B cell (primary cell): ENCODE measurements at regions of chr18 and their contacts with region 1.

Region 1: DNA sequence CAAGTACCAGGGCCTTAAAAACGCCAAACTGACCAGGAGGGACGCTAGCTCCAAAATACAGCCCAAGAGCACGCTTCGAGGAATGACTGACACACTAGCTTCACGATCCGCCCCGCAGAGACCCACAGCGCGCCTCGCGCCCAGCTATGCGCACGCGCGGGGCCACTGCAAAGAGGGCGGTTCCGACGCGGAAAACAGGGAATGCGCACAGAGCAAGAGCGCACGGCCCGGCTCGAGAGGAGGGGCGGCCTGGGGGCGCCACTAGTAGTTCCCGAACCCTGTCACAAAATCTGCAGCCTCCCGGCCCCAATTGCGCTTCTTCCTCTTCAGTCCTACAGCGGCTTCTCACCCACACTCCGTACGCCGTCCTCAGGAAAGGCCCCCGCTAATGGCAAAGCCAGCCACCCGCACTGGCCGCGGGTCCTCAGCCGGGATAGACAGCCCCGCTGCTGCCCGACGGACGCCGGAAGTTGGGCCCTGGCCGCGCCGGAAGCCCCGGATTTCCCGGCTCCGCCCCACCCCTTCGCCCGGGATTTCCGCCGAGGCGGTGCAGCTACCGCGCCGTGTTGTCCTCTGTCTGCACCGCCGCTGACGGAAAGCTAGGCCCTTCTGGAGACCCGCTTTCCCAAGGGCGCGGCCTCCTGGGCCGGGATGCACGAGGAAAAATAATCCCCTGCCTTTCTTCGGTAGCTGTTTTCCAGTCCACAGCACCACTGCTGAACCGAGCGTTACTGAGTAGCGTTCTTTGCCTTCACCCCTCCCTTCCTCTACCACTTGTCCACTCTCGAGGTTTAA is at the start of gene HDHD2:
- DNase-seq: peak; percentile 73
- ATAC-seq: peak; percentile 77
- H3K4me3 ChIP-seq: peak within 1 kb of the TSS; percentile 73 to 97 (median 87)
- H3K4me3 Mint-ChIP-seq: peak within 1 kb of the TSS; percentile 95
- H3K27ac ChIP-seq: peak within 1 kb of the TSS; percentile 48 to 89
- H3K27ac Mint-ChIP-seq: peak within 1 kb of the TSS; percentile 92
- H3K4me1 ChIP-seq: peaks cover 14 to 15% of the 10 kb centered on the region in 2 donors
- H3K4me1 Mint-ChIP-seq: peaks cover 35% of the 10 kb centered on the region
- H3K27me3 ChIP-seq: no peaks in the 10 kb centered on the region
- H3K27me3 Mint-ChIP-seq: no peaks in the 10 kb centered on the region
- CTCF ChIP-seq: no peak
- total RNA-seq, gene HDHD2: 43.9 and 45.5 TPM in 2 replicates

Region 2: GRCh38 chr18:46104128-46104911 is 1045.9 kb before region 1 on chr18 and contains the start of gene HAUS1:
- CTCF ChIA-PET with region 1: no interaction called
- POLR2A ChIA-PET with region 1: no interaction called
- intact Hi-C with region 1: loop called (anchors 10 kb)
- DNase-seq: peak; percentile 80
- ATAC-seq: peak; percentile 100
- H3K4me3 ChIP-seq: peak within 1 kb of the TSS; percentile 79 to 100 (median 90)
- H3K4me3 Mint-ChIP-seq: peak within 1 kb of the TSS; percentile 98
- H3K27ac ChIP-seq: peak within 1 kb of the TSS; percentile 56 to 64
- H3K27ac Mint-ChIP-seq: peak within 1 kb of the TSS; percentile 91
- H3K4me1 ChIP-seq: peaks cover 8 to 11% of the 10 kb centered on the region in 2 donors
- H3K4me1 Mint-ChIP-seq: peaks cover 18% of the 10 kb centered on the region
- H3K27me3 ChIP-seq: no peaks in the 10 kb centered on the region
- H3K27me3 Mint-ChIP-seq: no peaks in the 10 kb centered on the region
- CTCF ChIP-seq: no peak
- total RNA-seq, gene HAUS1: 28.4 and 30.9 TPM in 2 replicates

Region 3: GRCh38 chr18:47062471-47062870 is 87.8 kb before region 1 on chr18:
- CTCF ChIA-PET with region 1: no interaction called
- POLR2A ChIA-PET with region 1: no interaction called
- intact Hi-C with region 1: no loop called
- DNase-seq: no peak
- ATAC-seq: no peak
- H3K4me3 ChIP-seq: no peak overlapping the region
- H3K4me3 Mint-ChIP-seq: no peak overlapping the region
- H3K27ac ChIP-seq: no peak overlapping the region
- H3K27ac Mint-ChIP-seq: no peak overlapping the region
- H3K4me1 ChIP-seq: no peaks in the 10 kb centered on the region
- H3K4me1 Mint-ChIP-seq: no peaks in the 10 kb centered on the region
- H3K27me3 ChIP-seq: no peaks in the 10 kb centered on the region
- H3K27me3 Mint-ChIP-seq: no peaks in the 10 kb centered on the region
- CTCF ChIP-seq: no peak

Region 4: GRCh38 chr18:47175908-47176575 is 25.8 kb after region 1 on chr18 and contains the start of gene IER3IP1:
- CTCF ChIA-PET with region 1: interaction called, 3 read pairs
- POLR2A ChIA-PET with region 1: interaction called, 5 read pairs
- intact Hi-C with region 1: loop called (anchors 1 kb)
- DNase-seq: peak; percentile 92
- ATAC-seq: peak; percentile 97
- H3K4me3 ChIP-seq: peak within 1 kb of the TSS; percentile 74 to 95 (median 91)
- H3K4me3 Mint-ChIP-seq: peak within 1 kb of the TSS; percentile 26
- H3K27ac ChIP-seq: peak within 1 kb of the TSS in 1 of 2 donors; percentile 67
- H3K27ac Mint-ChIP-seq: peak within 1 kb of the TSS; percentile 86
- H3K4me1 ChIP-seq: peaks cover 14 to 15% of the 10 kb centered on the region in 2 donors
- H3K4me1 Mint-ChIP-seq: peaks cover 7% of the 10 kb centered on the region
- H3K27me3 ChIP-seq: peaks cover 0 to 6% (median 0%) of the 10 kb centered on the region in 4 experiments
- H3K27me3 Mint-ChIP-seq: peaks cover 3% of the 10 kb centered on the region
- CTCF ChIP-seq: no peak
- total RNA-seq, gene IER3IP1: 8.2 and 8.7 TPM in 2 replicates